Mammary epithelial cell (primary cell): ENCODE measurements at regions of chr9 and their contacts with region 1.

Region 1: GRCh38 chr9:108565651-108566378 is 290.0 kb downstream of the ACTL7B start:
- DNase-seq: peak; percentile 79
- H3K4me3 ChIP-seq: no peak overlapping the region
- H3K27ac ChIP-seq: no peak overlapping the region
- H3K4me1 ChIP-seq: peaks cover 39% of the 10 kb centered on the region
- H3K27me3 ChIP-seq: no peaks in the 10 kb centered on the region
- CTCF ChIP-seq: peak; percentile 80 to 88

Region 2: GRCh38 chr9:107421947-107422793 is 1143.6 kb before region 1 on chr9:
- CTCF ChIA-PET with region 1: no interaction called
- dilution Hi-C with region 1: no loop called
- in situ Hi-C with region 1: no loop called
- intact Hi-C with region 1: loop called (anchors 1 kb)
- DNase-seq: peak; percentile 59
- H3K4me3 ChIP-seq: no peak overlapping the region
- H3K27ac ChIP-seq: no peak overlapping the region
- H3K4me1 ChIP-seq: peaks cover 3% of the 10 kb centered on the region
- H3K27me3 ChIP-seq: no peaks in the 10 kb centered on the region
- CTCF ChIP-seq: peak; percentile 65 to 81

Region 3: GRCh38 chr9:107749787-107750444 is 815.9 kb before region 1 on chr9:
- CTCF ChIA-PET with region 1: no interaction called
- dilution Hi-C with region 1: no loop called
- in situ Hi-C with region 1: no loop called
- intact Hi-C with region 1: loop called (anchors 10 kb)
- DNase-seq: peak; percentile 88
- H3K4me3 ChIP-seq: no peak overlapping the region
- H3K27ac ChIP-seq: peak overlapping the region; percentile 60
- H3K4me1 ChIP-seq: peaks cover 36% of the 10 kb centered on the region
- H3K27me3 ChIP-seq: no peaks in the 10 kb centered on the region
- CTCF ChIP-seq: no peak

Region 4: DNA sequence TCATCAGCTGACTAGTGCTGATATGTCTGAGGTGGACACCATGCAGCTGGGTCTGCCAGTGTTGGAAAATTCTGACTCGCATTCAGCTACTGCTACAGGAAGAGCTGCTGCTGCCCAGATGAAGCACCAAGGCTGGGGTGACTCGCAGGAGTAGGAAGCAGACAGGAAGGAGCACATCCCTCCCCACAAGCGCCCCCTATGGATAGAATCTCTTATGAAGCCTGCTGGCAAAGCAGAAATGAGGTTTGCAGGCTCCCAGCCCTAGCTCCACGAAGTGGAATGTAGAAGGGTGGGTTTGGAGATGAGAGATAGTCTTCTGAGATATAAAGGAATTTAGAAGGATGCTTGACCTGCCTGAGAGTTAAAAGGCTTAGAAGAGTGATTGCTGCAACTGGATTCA is 153.1 kb before region 1 on chr9:
- CTCF ChIA-PET with region 1: interaction called, 9 read pairs
- dilution Hi-C with region 1: no loop called
- in situ Hi-C with region 1: loop called (anchors 5 kb)
- intact Hi-C with region 1: loop called (anchors 1 kb)
- DNase-seq: peak; percentile 15
- H3K4me3 ChIP-seq: no peak overlapping the region
- H3K27ac ChIP-seq: no peak overlapping the region
- H3K4me1 ChIP-seq: no peaks in the 10 kb centered on the region
- H3K27me3 ChIP-seq: no peaks in the 10 kb centered on the region
- CTCF ChIP-seq: no peak

Region 5: GRCh38 chr9:108543251-108543768 is 22.5 kb before region 1 on chr9:
- CTCF ChIA-PET with region 1: no interaction called
- dilution Hi-C with region 1: no loop called
- in situ Hi-C with region 1: no loop called
- intact Hi-C with region 1: loop called (anchors 1 kb)
- DNase-seq: peak; percentile 99
- H3K4me3 ChIP-seq: no peak overlapping the region
- H3K27ac ChIP-seq: peak overlapping the region; percentile 96
- H3K4me1 ChIP-seq: peaks cover 25% of the 10 kb centered on the region
- H3K27me3 ChIP-seq: no peaks in the 10 kb centered on the region
- CTCF ChIP-seq: peak in 1 of 2 donors; percentile 14

Region 6: DNA sequence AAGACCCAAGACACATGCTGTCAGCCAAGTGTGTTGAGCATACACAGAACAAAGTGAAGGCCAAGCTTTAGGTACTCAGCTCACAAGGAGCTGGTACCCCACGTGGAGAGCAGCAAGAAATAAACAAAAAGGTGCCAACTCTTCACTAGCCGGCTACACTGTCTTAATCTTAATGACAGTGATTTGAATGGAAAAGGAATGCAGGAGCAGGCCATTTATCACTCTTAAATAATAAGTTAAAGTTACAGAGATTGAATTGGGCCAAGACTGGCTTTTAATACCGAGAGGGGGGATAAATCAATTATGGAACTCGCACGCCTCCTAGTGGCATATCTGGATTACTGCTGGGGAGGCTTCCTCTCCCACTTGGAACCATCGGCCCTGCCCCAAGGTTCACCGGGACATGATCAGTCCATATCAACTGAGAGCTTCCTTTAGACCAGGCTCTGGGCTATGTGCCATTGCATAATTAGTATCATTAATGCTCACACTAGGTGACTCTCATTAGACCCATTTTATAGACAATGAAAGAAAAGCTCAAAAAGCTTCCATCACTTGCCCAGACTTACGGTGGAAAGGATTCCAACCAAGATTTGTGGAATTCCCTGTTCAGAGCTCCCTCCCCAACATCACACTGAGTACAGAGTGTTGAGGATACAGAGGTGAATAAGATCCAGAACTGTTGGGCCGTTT is 196.0 kb after region 1 on chr9:
- CTCF ChIA-PET with region 1: no interaction called
- dilution Hi-C with region 1: no loop called
- in situ Hi-C with region 1: loop called in 1 of 2 experiments (anchors 5 kb)
- intact Hi-C with region 1: loop called (anchors 1 kb)
- DNase-seq: peak; percentile 31
- H3K4me3 ChIP-seq: no peak overlapping the region
- H3K27ac ChIP-seq: no peak overlapping the region
- H3K4me1 ChIP-seq: no peaks in the 10 kb centered on the region
- H3K27me3 ChIP-seq: no peaks in the 10 kb centered on the region
- CTCF ChIP-seq: peak; percentile 86 to 95